A549 (cell line): ENCODE measurements at regions of chr20 and their contacts with region 1.

Region 1: GRCh38 chr20:4108495-4109306 is 93.3 kb upstream of the RNF24 start:
- DNase-seq: peak; percentile 91 to 95
- ATAC-seq: peak; percentile 79 to 87
- H3K4me3 ChIP-seq: no peak overlapping the region
- H3K27ac ChIP-seq: peak overlapping the region; percentile 94 to 96
- H3K4me1 ChIP-seq: peaks cover 54% of the 10 kb centered on the region
- CTCF ChIP-seq: peak; percentile 100
- EP300 ChIP-seq: peak in 1 of 2 experiments; percentile 50; a peak in 1 of 5 replicates
- POLR2A ChIP-seq: no peak
- RAD21 ChIP-seq: peak; percentile 100

Region 2: DNA sequence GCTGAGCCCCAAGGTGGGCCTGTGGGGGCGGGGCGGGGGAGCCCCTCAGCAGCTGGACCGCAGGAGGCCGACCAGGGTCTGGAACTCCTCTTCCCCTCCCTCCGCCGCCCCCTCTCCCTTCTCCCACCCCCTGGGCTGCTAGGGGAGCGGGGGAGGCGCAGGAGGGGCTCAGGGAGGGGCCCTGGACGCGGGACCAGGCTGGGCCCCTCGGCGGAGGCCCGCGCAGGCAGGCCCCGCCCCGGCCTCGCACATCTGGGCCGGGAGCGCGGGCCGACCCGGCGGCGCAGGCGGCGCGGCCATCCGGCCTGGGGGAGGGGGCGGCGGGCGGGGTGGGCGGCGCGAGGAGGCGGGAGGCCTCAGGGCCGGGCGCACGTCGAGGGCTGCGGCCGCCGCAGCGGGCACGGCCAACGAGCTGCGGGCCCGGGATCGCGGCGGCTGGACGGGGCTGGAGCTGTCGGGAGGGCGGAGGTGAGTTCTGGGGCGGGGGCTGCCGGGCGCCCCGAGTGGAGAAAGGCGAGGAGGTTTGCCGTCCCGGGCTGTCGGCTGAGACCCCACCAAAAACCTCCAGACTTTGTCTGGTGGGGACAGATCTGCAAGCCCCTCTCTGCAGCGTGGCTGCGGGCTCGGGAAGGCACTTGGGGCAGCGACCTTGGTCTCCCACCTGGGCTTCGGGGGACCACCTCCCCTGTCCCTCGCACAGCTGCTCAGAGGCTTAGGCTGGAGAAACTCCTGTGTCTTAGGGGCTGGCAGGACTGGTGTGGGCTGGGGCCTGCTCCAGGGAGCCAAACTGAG is 376.2 kb before region 1 on chr20 and contains the start of gene HSPA12B:
- CTCF ChIA-PET with region 1: no interaction called
- POLR2A ChIA-PET with region 1: no interaction called
- DNase-seq: no peak
- ATAC-seq: no peak
- H3K4me3 ChIP-seq: no peak within 1 kb of the TSS
- H3K27ac ChIP-seq: no peak within 1 kb of the TSS
- H3K4me1 ChIP-seq: peaks cover 12% of the 10 kb centered on the region
- CTCF ChIP-seq: no peak
- EP300 ChIP-seq: no peak
- POLR2A ChIP-seq: no peak
- RAD21 ChIP-seq: no peak
- polyA plus RNA-seq, gene HSPA12B: 0.25 and 0.37 TPM in 2 replicates

Region 3: DNA sequence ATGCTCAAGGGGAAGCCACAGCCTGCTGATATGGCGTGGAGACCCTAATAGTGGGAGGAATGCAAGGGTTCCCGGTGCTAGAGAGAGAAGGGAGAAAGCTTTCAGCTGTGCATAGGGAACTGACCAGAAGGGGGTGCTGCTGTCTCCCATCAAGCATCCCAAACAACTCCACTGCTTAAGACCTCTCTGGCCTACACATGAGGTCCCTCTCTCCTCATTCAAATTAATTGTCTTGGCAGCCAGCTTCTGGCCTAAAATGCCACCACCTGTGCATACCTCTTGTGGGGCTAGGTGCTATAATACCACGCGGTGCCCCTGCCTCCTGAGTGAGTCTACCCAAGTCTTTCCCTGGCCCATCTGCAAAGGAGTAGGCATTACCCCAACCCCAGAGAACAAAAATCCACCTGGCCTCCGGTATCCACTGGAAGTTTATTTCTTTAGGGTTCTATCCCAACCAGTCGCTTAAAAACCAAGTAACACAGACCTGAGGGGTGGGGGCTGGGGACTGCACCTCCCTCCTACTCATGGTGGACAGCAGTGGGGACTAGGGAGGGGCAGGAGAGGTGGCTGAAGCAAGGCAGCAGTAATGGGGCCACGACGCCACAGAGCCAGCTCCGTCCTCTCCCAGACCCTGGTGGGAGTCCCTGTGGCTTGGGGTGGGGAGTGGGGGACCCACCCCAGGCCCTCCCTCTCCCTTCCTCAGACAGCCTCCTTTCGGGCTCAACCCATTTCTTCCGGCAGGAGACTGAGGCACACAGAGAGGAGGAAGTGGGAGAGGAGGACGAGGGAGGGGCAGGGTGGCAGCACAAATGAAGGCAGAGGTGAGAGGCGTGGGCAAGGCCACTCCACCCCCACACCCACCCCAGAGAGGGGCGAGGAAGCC is 355.4 kb before region 1 on chr20:
- CTCF ChIA-PET with region 1: no interaction called
- POLR2A ChIA-PET with region 1: no interaction called
- DNase-seq: peak; percentile 85 to 89
- ATAC-seq: peak; percentile 28 to 62; a peak in 3 of 6 replicates
- H3K4me3 ChIP-seq: no peak overlapping the region
- H3K27ac ChIP-seq: no peak overlapping the region
- H3K4me1 ChIP-seq: peaks cover 7% of the 10 kb centered on the region; the same call in 2 of the 3 replicates
- CTCF ChIP-seq: peak; percentile 81
- EP300 ChIP-seq: no peak
- POLR2A ChIP-seq: no peak
- RAD21 ChIP-seq: peak; percentile 57 to 71

Region 4: DNA sequence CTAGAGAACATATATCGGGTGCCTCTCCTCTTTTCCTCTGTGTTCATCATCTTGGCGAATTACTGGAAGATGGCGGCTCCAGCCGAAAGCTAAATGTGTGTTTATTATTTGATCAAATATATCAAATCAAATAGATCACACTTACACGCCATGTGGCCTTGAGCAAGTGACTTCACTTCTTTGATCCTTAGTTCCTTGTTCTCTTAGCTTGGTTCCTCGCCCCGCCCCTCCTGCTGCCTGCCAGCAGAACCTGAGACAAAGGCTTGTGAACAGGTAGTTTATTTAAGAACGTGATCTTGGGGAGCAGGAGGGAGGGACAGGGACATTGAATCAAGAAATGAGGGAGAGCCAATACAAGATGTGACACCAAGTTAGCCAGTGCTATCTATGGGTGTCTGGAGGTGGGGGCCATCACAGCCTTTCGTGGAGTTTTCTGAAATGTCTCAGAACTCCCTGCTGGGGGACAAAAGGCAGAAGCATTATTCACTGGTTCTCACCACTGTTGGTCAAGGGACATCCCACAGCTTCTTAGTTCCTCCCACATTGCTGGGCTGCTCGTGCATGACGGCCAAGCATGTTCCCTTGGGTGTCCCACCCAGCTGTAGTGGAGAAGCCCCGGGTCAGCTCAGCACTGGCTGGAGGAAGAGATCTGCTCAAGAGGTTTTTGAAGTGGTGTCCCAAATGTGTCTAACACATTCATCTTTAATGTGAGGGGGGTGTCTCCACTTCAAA is 48.5 kb before region 1 on chr20:
- CTCF ChIA-PET with region 1: no interaction called
- POLR2A ChIA-PET with region 1: no interaction called
- DNase-seq: no peak
- ATAC-seq: no peak
- H3K4me3 ChIP-seq: no peak overlapping the region
- H3K27ac ChIP-seq: no peak overlapping the region
- H3K4me1 ChIP-seq: peaks cover 12% of the 10 kb centered on the region
- CTCF ChIP-seq: no peak
- EP300 ChIP-seq: no peak
- POLR2A ChIP-seq: no peak
- RAD21 ChIP-seq: no peak

Region 5: GRCh38 chr20:4091490-4092479 is 16.9 kb before region 1 on chr20:
- CTCF ChIA-PET with region 1: interaction called, 39 read pairs
- POLR2A ChIA-PET with region 1: no interaction called
- DNase-seq: peak; percentile 69 to 89
- ATAC-seq: peak; percentile 79 to 87
- H3K4me3 ChIP-seq: no peak overlapping the region
- H3K27ac ChIP-seq: peak overlapping the region; percentile 60 to 67
- H3K4me1 ChIP-seq: peaks cover 12% of the 10 kb centered on the region
- CTCF ChIP-seq: peak; percentile 70
- EP300 ChIP-seq: no peak
- POLR2A ChIP-seq: no peak
- RAD21 ChIP-seq: peak; percentile 65 to 76

Region 6: GRCh38 chr20:4141291-4142240 is 32.9 kb after region 1 on chr20:
- CTCF ChIA-PET with region 1: interaction called, 36 read pairs
- POLR2A ChIA-PET with region 1: no interaction called
- DNase-seq: no peak
- ATAC-seq: no peak
- H3K4me3 ChIP-seq: no peak overlapping the region
- H3K27ac ChIP-seq: peak overlapping the region in 1 of 2 experiments; percentile 56; a peak in 4 of 6 replicates
- H3K4me1 ChIP-seq: peaks cover 17% of the 10 kb centered on the region
- CTCF ChIP-seq: no peak
- EP300 ChIP-seq: no peak
- POLR2A ChIP-seq: no peak
- RAD21 ChIP-seq: no peak

Region 7: DNA sequence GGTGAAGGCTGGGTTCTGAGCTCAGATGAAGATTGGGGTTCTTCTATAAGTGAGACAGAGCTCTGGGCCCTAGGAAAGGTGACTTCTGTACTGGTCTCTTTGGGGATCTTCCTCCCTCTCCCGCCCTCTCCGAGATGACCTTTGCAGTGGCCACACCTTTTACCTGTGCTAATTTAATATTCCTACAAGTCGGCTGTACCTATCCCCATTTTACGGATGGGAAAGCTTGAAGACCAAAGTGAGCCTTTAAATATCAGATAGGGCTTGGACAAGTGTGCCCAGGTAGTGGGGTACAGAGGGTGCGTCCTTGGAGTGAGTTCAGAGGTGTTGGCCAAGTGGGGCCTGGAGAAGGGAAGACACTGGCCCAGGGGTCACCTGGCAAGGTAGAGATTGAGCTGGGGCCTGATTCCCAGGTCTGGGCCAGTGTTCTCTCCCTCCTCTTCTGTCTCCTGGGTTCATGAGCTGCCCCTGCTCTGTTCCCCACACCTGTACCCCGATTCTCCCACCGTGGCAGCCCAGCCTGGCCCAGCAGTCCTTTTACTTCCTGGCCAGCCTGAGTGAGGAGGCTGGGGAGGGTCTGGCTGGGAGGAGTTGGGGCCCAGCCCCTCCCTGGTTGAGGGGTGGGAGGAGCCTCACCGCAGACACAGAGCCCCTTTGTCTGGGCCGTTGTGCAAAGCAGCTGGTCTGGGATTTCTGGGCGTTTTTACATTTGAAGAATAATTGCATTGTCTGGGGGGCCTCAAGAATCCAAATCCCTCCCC is 58.7 kb after region 1 on chr20:
- CTCF ChIA-PET with region 1: interaction called, 67 read pairs
- POLR2A ChIA-PET with region 1: no interaction called
- DNase-seq: no peak
- ATAC-seq: no peak
- H3K4me3 ChIP-seq: no peak overlapping the region
- H3K27ac ChIP-seq: peak overlapping the region; percentile 44 to 73; a peak in 5 of 6 replicates
- H3K4me1 ChIP-seq: peaks cover 93% of the 10 kb centered on the region
- CTCF ChIP-seq: no peak
- EP300 ChIP-seq: no peak
- POLR2A ChIP-seq: no peak
- RAD21 ChIP-seq: no peak

Region 8: DNA sequence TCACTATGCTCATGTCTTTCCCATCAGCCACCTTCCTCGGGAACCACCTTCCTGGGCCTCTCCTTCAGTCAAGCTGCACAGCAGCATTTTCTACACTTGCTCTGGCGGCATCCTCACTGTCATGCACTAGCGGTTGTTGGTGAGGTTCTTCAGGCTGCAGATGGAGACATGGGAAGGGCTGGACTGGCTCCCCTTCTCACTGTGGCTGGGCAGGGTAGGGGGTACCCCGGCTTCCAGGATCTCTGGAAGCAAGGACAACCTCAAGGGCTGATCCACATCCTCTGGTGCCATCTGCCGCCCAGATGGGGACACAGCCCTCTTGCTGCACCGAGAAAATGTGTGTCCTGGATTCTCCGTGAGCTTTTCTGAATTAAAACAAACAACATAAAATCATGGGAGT is 86.8 kb after region 1 on chr20:
- CTCF ChIA-PET with region 1: interaction called, 122 read pairs
- POLR2A ChIA-PET with region 1: interaction called, 3 read pairs
- DNase-seq: peak; percentile 52 to 61
- ATAC-seq: peak; percentile 14 to 24; a peak in 3 of 6 replicates
- H3K4me3 ChIP-seq: no peak overlapping the region
- H3K27ac ChIP-seq: peak overlapping the region; percentile 48 to 88
- H3K4me1 ChIP-seq: peaks cover 55% of the 10 kb centered on the region
- CTCF ChIP-seq: peak; percentile 80
- EP300 ChIP-seq: no peak
- POLR2A ChIP-seq: no peak
- RAD21 ChIP-seq: peak; percentile 89 to 90

Region 9: GRCh38 chr20:4261333-4262217 is 152.9 kb after region 1 on chr20:
- CTCF ChIA-PET with region 1: no interaction called
- POLR2A ChIA-PET with region 1: no interaction called
- DNase-seq: no peak
- ATAC-seq: no peak
- H3K4me3 ChIP-seq: no peak overlapping the region
- H3K27ac ChIP-seq: no peak overlapping the region
- H3K4me1 ChIP-seq: no peaks in the 10 kb centered on the region
- CTCF ChIP-seq: no peak
- EP300 ChIP-seq: no peak
- POLR2A ChIP-seq: no peak
- RAD21 ChIP-seq: 0 out of 5 replicates have a peak, but pooled peaks of 1 of the 2 experiments have one; percentile 21